Caco-2 (cell line): ENCODE measurements at regions of chr6 and their contacts with region 1.

Region 1: DNA sequence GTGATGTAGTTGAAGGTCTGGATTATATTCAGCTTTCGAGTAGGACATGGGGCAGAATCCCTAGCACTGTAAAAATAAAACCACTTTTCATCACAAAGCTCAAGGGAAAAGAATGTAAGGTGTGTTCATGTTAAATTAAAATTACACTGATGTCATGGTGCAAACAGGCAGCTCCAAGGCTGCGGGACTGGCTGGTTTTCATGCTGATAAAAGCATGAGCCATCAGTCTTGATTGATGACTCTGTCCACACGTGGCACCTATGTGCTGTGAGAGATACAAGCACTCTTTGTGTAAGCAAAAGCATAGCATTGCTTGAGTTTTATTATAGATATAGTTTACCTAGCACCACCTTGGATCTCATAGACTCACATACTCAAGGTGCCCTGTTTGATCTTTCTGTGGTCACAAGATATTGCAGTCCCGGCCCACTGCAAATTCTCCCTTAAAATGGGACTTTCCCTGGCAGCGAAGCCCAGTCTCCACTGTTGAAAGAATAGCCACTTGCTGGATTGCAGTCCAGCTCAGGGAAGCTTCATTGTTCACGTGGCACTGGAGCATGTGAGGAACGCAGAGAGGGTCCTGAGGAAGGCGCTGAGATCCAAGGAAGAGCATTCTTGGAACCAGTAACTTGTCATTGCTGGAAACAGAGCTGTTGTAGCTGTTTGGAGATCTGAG is 90.6 kb downstream of the TIAM2 start:
- DNase-seq: peak; percentile 64 to 83
- H3K4me3 ChIP-seq: no peak overlapping the region
- H3K4me3 Mint-ChIP-seq: peak overlapping the region; percentile 27
- H3K27ac Mint-ChIP-seq: peak overlapping the region; percentile 87
- H3K4me1 ChIP-seq: peaks cover 23% of the 10 kb centered on the region
- H3K4me1 Mint-ChIP-seq: peaks cover 11% of the 10 kb centered on the region
- H3K27me3 ChIP-seq: no peaks in the 10 kb centered on the region
- H3K27me3 Mint-ChIP-seq: no peaks in the 10 kb centered on the region
- CTCF ChIP-seq: no peak

Region 2: DNA sequence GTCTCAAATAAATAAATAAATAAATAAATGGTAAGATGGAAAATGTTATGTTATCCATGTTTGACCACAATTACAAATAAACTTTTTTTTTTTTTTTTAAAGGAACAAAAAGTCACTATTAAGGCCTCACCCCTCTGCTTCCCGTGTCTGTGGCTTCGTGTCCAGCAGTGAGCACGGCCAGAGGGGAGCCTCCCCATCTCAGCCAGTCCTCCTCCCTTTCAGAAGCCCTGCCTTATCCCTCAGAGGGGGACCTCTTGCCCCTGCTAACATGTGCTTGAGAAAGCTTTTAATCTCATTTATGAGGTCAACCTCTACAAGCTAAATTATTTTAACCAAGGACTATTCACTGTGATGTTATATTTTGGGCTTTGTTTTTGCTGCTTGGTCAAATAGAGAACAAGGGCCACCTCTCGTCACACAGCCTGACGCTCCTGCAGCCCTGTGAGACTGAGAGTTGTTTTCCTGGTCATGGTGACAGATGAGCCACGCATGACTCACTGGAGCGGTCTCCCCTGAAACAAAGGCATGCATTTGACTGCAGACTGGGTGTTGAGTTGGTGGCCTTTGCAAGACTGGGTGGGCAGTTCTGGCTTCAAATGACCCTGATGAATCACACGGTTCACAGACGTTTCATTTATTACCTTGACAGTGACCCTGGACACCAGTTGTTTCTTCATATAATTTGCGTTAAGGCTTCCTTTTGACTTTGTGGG is 41.2 kb after region 1 on chr6:
- CTCF ChIA-PET with region 1: no interaction called
- POLR2A ChIA-PET with region 1: no interaction called
- intact Hi-C with region 1: no loop called
- DNase-seq: no peak
- H3K4me3 ChIP-seq: no peak overlapping the region
- H3K4me3 Mint-ChIP-seq: no peak overlapping the region
- H3K27ac Mint-ChIP-seq: no peak overlapping the region
- H3K4me1 ChIP-seq: no peaks in the 10 kb centered on the region
- H3K4me1 Mint-ChIP-seq: peaks cover 8% of the 10 kb centered on the region
- H3K27me3 ChIP-seq: no peaks in the 10 kb centered on the region
- H3K27me3 Mint-ChIP-seq: no peaks in the 10 kb centered on the region
- CTCF ChIP-seq: no peak

Region 3: GRCh38 chr6:155143029-155143577 is 57.4 kb after region 1 on chr6:
- CTCF ChIA-PET with region 1: no interaction called
- POLR2A ChIA-PET with region 1: no interaction called
- intact Hi-C with region 1: loop called (anchors 5 kb)
- DNase-seq: no peak
- H3K4me3 ChIP-seq: no peak overlapping the region
- H3K4me3 Mint-ChIP-seq: no peak overlapping the region
- H3K27ac Mint-ChIP-seq: no peak overlapping the region
- H3K4me1 ChIP-seq: peaks cover 17% of the 10 kb centered on the region; the same call in 1 of the 2 replicates
- H3K4me1 Mint-ChIP-seq: peaks cover 10% of the 10 kb centered on the region
- H3K27me3 ChIP-seq: no peaks in the 10 kb centered on the region
- H3K27me3 Mint-ChIP-seq: no peaks in the 10 kb centered on the region
- CTCF ChIP-seq: no peak

Region 4: DNA sequence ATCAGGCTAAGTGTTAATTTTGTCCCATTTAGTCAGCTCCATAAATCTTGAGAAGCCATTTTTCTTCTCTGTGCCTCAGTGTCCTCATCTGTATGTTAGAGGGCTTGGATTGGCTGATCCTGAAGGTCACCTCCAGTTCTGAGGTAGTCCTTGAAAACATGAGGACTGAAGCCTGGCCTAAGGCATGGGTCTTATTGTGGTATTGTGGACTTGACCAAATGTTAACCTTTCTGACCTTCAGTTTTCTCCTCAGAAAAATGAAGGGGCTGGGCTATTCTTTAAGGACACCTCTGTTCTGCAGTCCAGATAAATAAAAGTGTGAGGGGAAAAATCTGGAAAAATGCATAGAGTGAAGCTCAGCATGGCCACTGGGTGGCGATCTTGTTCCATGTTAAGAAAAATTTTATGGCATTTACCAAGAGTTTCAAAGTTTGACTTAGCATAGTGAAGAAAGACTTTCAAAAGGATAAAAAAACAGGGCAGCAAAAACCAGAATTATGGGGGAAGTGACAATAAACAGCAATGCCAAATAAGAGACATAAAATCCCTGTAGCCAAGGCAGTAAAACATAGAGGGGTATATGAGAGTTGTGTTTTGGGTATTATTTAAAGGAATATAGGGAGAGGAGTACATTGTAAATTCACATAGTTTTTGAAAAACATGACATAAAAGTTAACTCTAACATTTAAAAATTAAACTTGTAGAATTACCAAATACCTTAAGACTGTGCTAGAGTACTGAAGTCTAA is 241.8 kb after region 1 on chr6:
- CTCF ChIA-PET with region 1: no interaction called
- POLR2A ChIA-PET with region 1: no interaction called
- intact Hi-C with region 1: no loop called
- DNase-seq: peak; percentile 53 to 82
- H3K4me3 ChIP-seq: peak overlapping the region; percentile 39; the same call in 1 of the 2 replicates
- H3K4me3 Mint-ChIP-seq: peak overlapping the region; percentile 82
- H3K27ac Mint-ChIP-seq: peak overlapping the region; percentile 98
- H3K4me1 ChIP-seq: peaks cover 29% of the 10 kb centered on the region
- H3K4me1 Mint-ChIP-seq: peaks cover 25% of the 10 kb centered on the region
- H3K27me3 ChIP-seq: no peaks in the 10 kb centered on the region
- H3K27me3 Mint-ChIP-seq: no peaks in the 10 kb centered on the region
- CTCF ChIP-seq: peak; percentile 68 to 71